ENCODE measurements at regions of chr9 and their contacts with region 1.

Region 1: GRCh38 chr9:112379177-112380101 is 469 bp upstream of the HSDL2 start:
- DNase-seq: peak; percentile 96
- ATAC-seq: peak; percentile 93
- H3K4me3 ChIP-seq: peak overlapping the region; percentile 82 to 98 (median 89)
- H3K4me3 Mint-ChIP-seq: peak overlapping the region; percentile 95
- H3K27ac ChIP-seq: peak overlapping the region; percentile 78 to 88
- H3K27ac Mint-ChIP-seq: peak overlapping the region; percentile 92
- H3K4me1 ChIP-seq: peaks cover 27 to 30% of the 10 kb centered on the region in 2 donors
- H3K4me1 Mint-ChIP-seq: peaks cover 59% of the 10 kb centered on the region
- H3K27me3 ChIP-seq: no peaks in the 10 kb centered on the region
- H3K27me3 Mint-ChIP-seq: no peaks in the 10 kb centered on the region
- CTCF ChIP-seq: no peak

Region 2: DNA sequence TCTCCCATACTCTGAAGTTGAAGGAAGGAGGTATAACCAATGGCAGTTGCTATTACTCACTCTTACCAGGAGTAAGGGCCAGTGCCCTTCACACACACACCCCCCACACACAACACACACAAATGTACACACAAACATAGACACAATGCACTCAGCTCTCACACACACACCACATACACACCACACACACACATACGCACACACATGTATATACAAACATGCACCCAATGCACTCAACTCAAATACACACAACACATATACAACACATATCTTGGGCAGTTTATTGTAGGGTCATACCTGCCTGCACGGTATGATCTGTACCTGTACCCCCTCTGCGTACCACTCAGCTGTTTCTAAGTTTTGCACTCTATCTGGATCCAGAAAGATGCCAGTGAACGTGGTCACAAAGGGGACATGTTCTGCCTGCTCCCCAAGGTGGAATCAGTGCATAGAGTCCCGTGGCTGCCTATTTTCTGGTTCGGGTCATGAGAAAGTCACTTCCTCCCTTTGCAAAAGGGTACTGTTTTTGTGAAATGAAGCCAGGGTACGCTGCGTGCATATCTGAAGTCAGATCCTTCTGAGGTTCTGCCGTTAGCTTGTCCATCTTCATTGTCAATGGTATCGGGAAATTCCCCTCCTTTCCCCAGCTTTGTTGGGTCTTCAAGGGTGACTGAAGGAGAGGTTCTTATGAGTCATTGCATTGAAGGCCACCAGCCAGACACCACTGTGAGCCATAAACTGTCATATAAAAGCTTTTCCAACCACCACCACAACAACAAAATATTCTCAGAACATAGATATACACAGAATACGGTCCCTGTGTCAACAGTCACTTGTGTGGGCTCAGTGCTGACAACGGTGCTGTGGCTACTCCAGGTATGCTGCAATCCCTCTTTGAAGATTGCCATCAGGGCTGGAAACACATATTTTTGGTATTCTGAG is 350.9 kb before region 1 on chr9:
- CTCF ChIA-PET with region 1: no interaction called
- POLR2A ChIA-PET with region 1: no interaction called
- intact Hi-C with region 1: loop called (anchors 5 kb)
- DNase-seq: peak; percentile 56
- ATAC-seq: peak; percentile 53
- H3K4me3 ChIP-seq: no peak overlapping the region
- H3K4me3 Mint-ChIP-seq: peak overlapping the region; percentile 67
- H3K27ac ChIP-seq: peak overlapping the region in 1 of 2 donors; percentile 87
- H3K27ac Mint-ChIP-seq: peak overlapping the region; percentile 89
- H3K4me1 ChIP-seq: peaks cover 55% of the 10 kb centered on the region in 2 donors
- H3K4me1 Mint-ChIP-seq: peaks cover 55% of the 10 kb centered on the region
- H3K27me3 ChIP-seq: no peaks in the 10 kb centered on the region
- H3K27me3 Mint-ChIP-seq: no peaks in the 10 kb centered on the region
- CTCF ChIP-seq: no peak

Region 3: DNA sequence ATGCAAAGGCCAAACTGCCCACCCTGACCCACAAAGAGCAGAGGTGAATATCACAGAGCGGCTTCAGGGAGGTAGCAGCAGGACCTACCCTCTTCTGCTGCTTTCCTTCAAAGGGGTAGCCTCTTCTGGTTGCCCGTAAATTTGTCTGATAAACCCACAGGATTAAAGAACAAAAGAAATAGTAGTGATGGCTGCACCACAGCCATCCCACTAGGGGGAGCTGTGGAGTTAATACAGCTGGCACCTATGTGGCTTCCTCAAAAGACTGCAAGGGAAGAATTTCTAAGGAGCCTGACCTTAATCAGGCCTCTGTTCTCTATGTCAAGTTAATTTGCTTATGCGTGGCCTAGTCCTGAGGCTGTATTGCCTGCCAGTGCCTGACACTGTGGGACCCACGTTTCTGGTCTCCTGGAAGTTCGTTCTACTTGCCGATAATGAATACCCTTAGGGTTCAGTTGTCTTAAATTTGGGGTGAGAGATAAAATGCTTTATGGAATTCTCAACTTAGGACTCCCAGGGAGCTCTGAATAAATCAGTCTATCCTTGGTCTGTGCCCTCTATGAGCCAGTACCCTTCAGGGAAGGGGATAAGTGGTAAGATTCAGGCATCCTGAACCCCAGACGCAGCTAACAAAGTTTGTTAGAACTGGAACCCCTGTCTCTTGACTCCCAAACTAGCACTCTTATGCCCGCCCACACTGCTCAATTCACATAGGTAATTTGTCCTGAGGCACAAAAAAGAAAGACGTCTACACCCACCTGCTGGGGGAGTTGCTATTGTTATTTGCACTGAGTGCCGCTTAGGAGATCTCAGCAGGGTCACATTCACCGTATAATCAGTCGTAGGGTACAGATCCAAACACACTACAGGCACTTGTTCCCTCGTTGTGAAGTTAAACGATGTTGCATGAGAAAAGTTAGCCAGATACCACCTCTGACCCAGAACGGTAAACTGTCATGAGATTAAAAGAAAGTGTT is 281.4 kb before region 1 on chr9:
- CTCF ChIA-PET with region 1: interaction called, 11 read pairs
- POLR2A ChIA-PET with region 1: no interaction called
- intact Hi-C with region 1: no loop called
- DNase-seq: peak; percentile 86
- ATAC-seq: peak; percentile 94
- H3K4me3 ChIP-seq: no peak overlapping the region
- H3K4me3 Mint-ChIP-seq: no peak overlapping the region
- H3K27ac ChIP-seq: no peak overlapping the region
- H3K27ac Mint-ChIP-seq: peak overlapping the region; percentile 16
- H3K4me1 ChIP-seq: peaks cover 10 to 13% of the 10 kb centered on the region in 2 donors
- H3K4me1 Mint-ChIP-seq: peaks cover 37% of the 10 kb centered on the region
- H3K27me3 ChIP-seq: no peaks in the 10 kb centered on the region
- H3K27me3 Mint-ChIP-seq: no peaks in the 10 kb centered on the region
- CTCF ChIP-seq: peak; percentile 94

Region 4: DNA sequence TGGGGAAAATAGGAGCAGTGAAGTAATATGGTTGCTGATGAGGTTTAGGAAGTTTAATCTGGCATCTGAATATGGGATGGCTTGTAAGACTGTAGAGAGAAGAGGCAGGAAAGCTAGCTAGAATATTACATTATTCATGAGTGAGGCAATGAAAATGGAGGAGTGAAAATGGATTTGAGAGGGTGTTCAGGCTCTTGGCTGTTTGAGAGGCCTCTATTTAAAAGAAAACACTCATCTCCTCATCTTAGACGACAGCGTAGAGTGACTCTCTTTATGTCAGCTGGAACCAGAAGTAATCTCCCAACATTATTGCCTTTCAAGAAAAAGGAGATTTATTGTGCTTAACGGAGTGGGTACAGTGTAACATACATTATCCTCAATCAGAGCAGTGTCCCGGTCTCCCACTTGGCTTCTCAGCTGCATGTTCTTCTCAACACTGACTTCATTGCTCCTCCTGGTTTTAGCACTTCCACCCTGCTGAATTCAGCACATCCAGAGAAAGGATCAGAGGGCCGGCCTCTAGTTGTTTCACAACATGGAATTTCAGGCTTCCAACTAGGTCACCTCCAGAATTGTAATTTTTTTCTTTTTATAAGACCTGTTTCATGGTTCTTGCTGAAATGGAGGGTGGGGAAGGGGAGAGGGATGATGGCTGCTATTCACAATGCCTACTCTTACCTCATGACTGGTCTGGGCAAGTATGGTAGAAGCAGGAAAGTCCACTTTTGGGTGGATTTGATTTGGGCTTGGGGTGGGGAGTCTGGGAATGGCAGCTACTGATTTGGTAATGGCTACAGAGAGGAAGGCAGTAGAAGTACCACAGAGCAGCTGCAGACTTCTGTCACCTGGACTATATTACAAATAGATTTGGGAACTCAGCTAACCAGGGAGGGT is 54.3 kb after region 1 on chr9:
- CTCF ChIA-PET with region 1: no interaction called
- POLR2A ChIA-PET with region 1: no interaction called
- intact Hi-C with region 1: no loop called
- DNase-seq: no peak
- ATAC-seq: no peak
- H3K4me3 ChIP-seq: no peak overlapping the region
- H3K4me3 Mint-ChIP-seq: no peak overlapping the region
- H3K27ac ChIP-seq: no peak overlapping the region
- H3K27ac Mint-ChIP-seq: no peak overlapping the region
- H3K4me1 ChIP-seq: no peaks in the 10 kb centered on the region
- H3K4me1 Mint-ChIP-seq: no peaks in the 10 kb centered on the region
- H3K27me3 ChIP-seq: no peaks in the 10 kb centered on the region
- H3K27me3 Mint-ChIP-seq: no peaks in the 10 kb centered on the region
- CTCF ChIP-seq: no peak

Region 5: GRCh38 chr9:112486221-112487007 is 107.0 kb after region 1 on chr9 and contains the start of gene KIAA1958:
- CTCF ChIA-PET with region 1: interaction called, 3 read pairs
- POLR2A ChIA-PET with region 1: no interaction called
- intact Hi-C with region 1: loop called (anchors 1 kb)
- DNase-seq: peak; percentile 88
- ATAC-seq: peak; percentile 87
- H3K4me3 ChIP-seq: peak within 1 kb of the TSS; percentile 71 to 85 (median 77)
- H3K4me3 Mint-ChIP-seq: peak within 1 kb of the TSS; percentile 100
- H3K27ac ChIP-seq: peak within 1 kb of the TSS; percentile 58 to 69
- H3K27ac Mint-ChIP-seq: peak within 1 kb of the TSS; percentile 96
- H3K4me1 ChIP-seq: peaks cover 5 to 13% of the 10 kb centered on the region in 2 donors
- H3K4me1 Mint-ChIP-seq: peaks cover 22% of the 10 kb centered on the region
- H3K27me3 ChIP-seq: no peaks in the 10 kb centered on the region
- H3K27me3 Mint-ChIP-seq: no peaks in the 10 kb centered on the region
- CTCF ChIP-seq: no peak
- total RNA-seq, gene KIAA1958: 15.3 and 17.2 TPM in 2 replicates

Region 6: GRCh38 chr9:112793213-112793810 is 413.9 kb after region 1 on chr9:
- CTCF ChIA-PET with region 1: interaction called, 7 read pairs
- POLR2A ChIA-PET with region 1: no interaction called
- intact Hi-C with region 1: loop called (anchors 5 kb)
- DNase-seq: peak; percentile 85
- ATAC-seq: peak; percentile 97
- H3K4me3 ChIP-seq: no peak overlapping the region
- H3K4me3 Mint-ChIP-seq: no peak overlapping the region
- H3K27ac ChIP-seq: no peak overlapping the region
- H3K27ac Mint-ChIP-seq: peak overlapping the region; percentile 46
- H3K4me1 ChIP-seq: peaks cover 6 to 7% of the 10 kb centered on the region in 2 donors
- H3K4me1 Mint-ChIP-seq: peaks cover 27% of the 10 kb centered on the region
- H3K27me3 ChIP-seq: no peaks in the 10 kb centered on the region
- H3K27me3 Mint-ChIP-seq: no peaks in the 10 kb centered on the region
- CTCF ChIP-seq: peak; percentile 88

Region 7: GRCh38 chr9:112809351-112809848 is 430.0 kb after region 1 on chr9:
- CTCF ChIA-PET with region 1: no interaction called
- POLR2A ChIA-PET with region 1: no interaction called
- intact Hi-C with region 1: loop called (anchors 1 kb)
- DNase-seq: peak; percentile 74
- ATAC-seq: peak; percentile 90
- H3K4me3 ChIP-seq: peak overlapping the region in 3 of 5 experiments; percentile 10 to 45 (median 15)
- H3K4me3 Mint-ChIP-seq: no peak overlapping the region
- H3K27ac ChIP-seq: no peak overlapping the region
- H3K27ac Mint-ChIP-seq: no peak overlapping the region
- H3K4me1 ChIP-seq: peaks cover 39% of the 10 kb centered on the region in 2 donors
- H3K4me1 Mint-ChIP-seq: peaks cover 19% of the 10 kb centered on the region
- H3K27me3 ChIP-seq: peaks cover 0 to 9% (median 8%) of the 10 kb centered on the region in 4 experiments
- H3K27me3 Mint-ChIP-seq: peaks cover 20% of the 10 kb centered on the region
- CTCF ChIP-seq: no peak

Measured in B cell (primary cell).